ENCODE measurements at regions of chr1 and their contacts with region 1.

Region 1: GRCh38 chr1:245825128-245825901 is 670.5 kb downstream of the KIF26B start:
- DNase-seq: no peak
- ATAC-seq: peak; percentile 77

Region 2: DNA sequence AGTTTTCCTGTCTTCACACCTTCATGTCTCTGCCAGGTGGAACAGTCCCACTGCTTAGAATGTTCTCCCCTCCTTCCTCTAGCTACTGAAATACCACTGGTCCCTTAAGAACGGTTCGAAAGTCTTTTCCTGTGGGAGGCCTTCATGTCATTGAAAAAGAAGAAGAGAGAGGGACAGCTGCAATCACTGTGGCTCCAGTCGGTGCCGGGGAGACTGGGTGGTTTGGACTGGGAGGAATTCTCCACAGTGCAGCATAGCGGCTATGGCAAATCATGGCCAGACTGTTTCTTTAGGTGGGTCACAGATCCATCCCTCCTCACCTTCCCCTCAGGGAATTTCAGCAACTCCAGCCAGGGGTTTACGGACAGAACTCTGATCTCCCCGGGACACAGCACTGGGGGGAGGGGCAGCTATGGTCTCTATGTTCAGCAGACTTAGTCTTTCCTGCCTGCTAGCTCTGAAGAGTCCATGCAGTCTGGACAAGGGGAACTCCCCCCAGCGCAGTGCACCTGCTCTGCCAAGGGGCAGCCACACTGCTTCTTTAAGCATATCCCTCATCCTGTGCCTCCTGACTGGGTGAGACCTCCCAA is 114.5 kb after region 1 on chr1:
- intact Hi-C with region 1: no loop called
- DNase-seq: no peak
- ATAC-seq: no peak

Region 3: GRCh38 chr1:246002725-246003441 is 177.6 kb after region 1 on chr1:
- intact Hi-C with region 1: loop called (anchors 5 kb)
- DNase-seq: peak; percentile 93
- ATAC-seq: peak; percentile 79